Right ventricle myocardium inferior (tissue), 1 donor: ENCODE measurements at regions of chr15 and their contacts with region 1.

Region 1: GRCh38 chr15:39491886-39492490 is 88.9 kb upstream of the THBS1 start:
- DNase-seq: no peak
- ATAC-seq: peak; percentile 34

Region 2: DNA sequence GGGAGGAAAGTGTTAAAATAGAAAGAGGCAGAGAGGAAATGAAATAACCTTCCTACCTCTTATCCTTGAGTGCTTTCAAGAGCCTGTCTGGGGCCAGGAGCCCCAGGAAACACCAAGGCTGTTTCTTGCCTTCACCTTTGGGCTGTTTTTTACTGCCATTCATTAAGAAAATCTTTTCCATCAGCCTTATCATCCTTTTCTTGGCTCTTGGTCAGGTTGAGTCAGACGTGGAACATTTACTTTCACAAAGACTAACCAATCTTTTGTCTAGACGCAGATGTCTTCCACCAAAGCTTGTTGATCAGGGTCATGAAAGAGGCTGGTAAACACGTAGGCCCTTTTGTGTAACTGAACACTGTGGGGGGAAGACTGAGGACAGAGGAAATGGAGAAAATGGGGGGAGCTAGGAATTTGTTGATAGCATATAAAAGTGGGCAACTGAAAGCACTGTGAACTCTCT is 62.1 kb before region 1 on chr15:
- intact Hi-C with region 1: loop called (anchors 2 kb)
- DNase-seq: no peak
- ATAC-seq: no peak

Region 3: DNA sequence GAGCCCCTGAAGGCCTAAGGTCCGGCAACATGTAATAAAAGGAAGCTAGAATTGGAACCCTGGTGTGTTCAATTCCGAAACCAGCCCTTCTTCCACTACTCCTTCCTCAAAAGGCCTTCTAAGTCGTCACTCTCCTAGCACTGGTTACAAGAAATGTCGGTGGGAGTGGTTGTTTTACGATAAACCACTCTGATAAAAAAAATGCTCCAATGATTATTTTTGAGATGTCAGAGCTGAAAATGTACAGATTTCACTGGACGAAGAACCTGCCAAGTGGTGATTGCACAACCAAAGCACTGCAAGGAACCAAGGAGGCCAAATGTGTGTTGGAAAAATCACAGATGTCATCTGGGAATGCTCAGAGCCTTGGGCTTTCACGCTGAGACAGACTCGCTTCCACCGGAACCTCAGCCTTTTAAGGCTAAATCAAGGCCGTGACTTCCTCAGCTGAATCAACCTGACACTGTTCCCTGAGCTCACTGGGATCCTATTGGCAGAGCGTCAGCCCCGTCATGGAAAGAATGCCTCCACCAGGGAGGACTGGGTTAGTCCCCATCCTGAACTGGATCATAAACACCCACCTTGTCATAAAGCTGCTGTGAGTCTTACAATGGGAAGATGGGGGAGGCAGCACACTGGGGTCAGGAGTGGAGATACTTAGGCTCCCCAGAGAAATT is 19.2 kb before region 1 on chr15:
- intact Hi-C with region 1: no loop called
- DNase-seq: peak; percentile 91
- ATAC-seq: peak; percentile 97